ENCODE measurements at regions of chr11 and their contacts with region 1.

Region 1: DNA sequence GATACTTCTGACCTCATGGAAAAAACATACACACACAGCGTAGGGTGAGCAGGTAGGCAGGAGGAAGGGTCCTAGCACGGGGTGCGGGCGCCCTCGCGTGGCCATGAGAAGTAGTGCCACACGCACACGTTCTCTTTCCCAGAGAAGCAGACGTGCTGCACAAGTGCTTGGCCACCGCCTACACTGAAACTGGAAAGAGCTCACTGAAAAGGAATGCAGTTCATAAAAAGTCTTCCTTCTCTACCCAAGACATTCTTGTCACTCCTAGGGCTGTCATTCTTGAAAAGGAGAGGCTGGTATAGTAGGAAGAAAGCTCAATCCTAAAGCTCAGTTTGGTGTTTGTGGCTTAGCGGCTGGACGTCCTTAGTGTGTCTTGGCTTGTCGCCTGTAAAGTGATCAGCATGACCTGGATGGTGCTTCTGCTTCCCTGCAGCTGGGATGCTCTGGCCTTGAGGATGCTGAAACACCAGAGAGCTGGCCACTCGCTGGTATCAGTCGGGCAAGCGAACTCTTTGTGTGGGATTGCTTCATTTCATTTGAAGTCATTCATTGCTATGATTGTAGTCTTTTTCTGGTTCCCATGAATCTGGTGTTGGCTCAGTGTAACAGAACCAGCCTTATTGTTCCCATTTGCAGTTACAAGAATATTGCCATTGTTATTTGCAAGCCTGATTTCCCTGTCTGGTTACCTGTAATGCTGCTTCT is 303.8 kb downstream of the NTM start:
- DNase-seq: peak in 2 of 9 experiments; percentile 11 to 13
- ATAC-seq: no peak
- H3K4me3 ChIP-seq: no peak overlapping the region
- H3K4me3 Mint-ChIP-seq: no peak overlapping the region
- H3K27ac ChIP-seq: no peak overlapping the region
- H3K27ac Mint-ChIP-seq: no peak overlapping the region
- H3K4me1 ChIP-seq: no peaks in the 10 kb centered on the region
- H3K4me1 Mint-ChIP-seq: no peaks in the 10 kb centered on the region
- H3K27me3 ChIP-seq: no peaks in the 10 kb centered on the region
- H3K27me3 Mint-ChIP-seq: no peaks in the 10 kb centered on the region
- CTCF ChIP-seq: no peak

Region 2: DNA sequence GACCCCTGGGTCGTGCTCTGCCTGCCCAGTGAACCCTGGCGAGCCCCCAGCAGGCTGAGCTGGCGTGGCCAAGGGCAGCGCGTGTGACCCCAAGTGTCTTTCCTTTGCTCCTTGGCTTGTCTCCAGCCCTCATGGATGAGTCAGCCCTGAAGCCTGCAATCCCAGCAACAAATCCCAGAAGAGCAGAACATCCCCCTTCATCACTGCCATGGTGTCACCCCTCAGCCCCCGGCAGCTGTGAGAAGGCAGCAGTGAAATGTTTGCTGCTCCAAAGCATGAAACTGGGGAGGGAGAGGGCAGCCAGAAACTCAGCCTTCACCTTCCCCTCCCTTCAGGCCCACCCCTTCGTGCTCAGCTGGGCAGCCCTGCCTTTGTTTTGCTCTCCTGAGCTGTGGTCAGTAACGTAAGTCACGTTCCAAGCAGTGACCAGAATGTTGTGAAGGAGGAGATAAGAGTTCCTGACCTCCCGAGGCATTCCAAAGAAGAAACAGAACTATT is 1196.0 kb before region 1 on chr11:
- CTCF ChIA-PET with region 1: no interaction called
- POLR2A ChIA-PET with region 1: no interaction called
- intact Hi-C with region 1: no loop called
- DNase-seq: no peak
- ATAC-seq: no peak
- H3K4me3 ChIP-seq: no peak overlapping the region
- H3K4me3 Mint-ChIP-seq: no peak overlapping the region
- H3K27ac ChIP-seq: no peak overlapping the region
- H3K27ac Mint-ChIP-seq: no peak overlapping the region
- H3K4me1 ChIP-seq: no peaks in the 10 kb centered on the region
- H3K4me1 Mint-ChIP-seq: no peaks in the 10 kb centered on the region
- H3K27me3 ChIP-seq: no peaks in the 10 kb centered on the region
- H3K27me3 Mint-ChIP-seq: no peaks in the 10 kb centered on the region
- CTCF ChIP-seq: no peak

Region 3: GRCh38 chr11:130924770-130925169 is 749.4 kb before region 1 on chr11:
- CTCF ChIA-PET with region 1: no interaction called
- POLR2A ChIA-PET with region 1: no interaction called
- intact Hi-C with region 1: loop called in 1 of 2 experiments (anchors 5 kb)
- DNase-seq: no peak
- ATAC-seq: no peak
- H3K4me3 ChIP-seq: no peak overlapping the region
- H3K4me3 Mint-ChIP-seq: no peak overlapping the region
- H3K27ac ChIP-seq: no peak overlapping the region
- H3K27ac Mint-ChIP-seq: no peak overlapping the region
- H3K4me1 ChIP-seq: no peaks in the 10 kb centered on the region
- H3K4me1 Mint-ChIP-seq: no peaks in the 10 kb centered on the region
- H3K27me3 ChIP-seq: no peaks in the 10 kb centered on the region
- H3K27me3 Mint-ChIP-seq: peaks cover 29% of the 10 kb centered on the region
- CTCF ChIP-seq: no peak

Region 4: DNA sequence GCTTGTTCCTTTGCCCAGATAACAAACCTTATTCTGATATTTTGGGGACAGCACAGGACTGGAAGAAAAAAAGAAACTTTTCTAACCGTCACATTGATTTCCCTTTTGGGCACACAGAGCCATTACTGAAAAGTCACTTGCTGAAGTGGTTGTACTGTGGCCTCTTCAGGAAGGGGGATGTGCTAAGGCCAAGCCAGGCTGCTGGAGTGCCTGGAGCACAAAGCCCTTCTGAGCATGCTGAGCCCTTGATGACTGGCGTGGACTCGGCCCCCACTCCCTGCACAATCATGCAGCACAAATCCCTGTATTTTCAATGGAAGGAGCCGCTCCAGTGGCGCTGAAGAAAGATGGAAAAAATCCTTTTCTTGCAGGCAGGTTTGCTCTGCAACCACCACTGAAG is 139.6 kb before region 1 on chr11:
- CTCF ChIA-PET with region 1: no interaction called
- POLR2A ChIA-PET with region 1: no interaction called
- intact Hi-C with region 1: no loop called
- DNase-seq: no peak
- ATAC-seq: no peak
- H3K4me3 ChIP-seq: no peak overlapping the region
- H3K4me3 Mint-ChIP-seq: no peak overlapping the region
- H3K27ac ChIP-seq: no peak overlapping the region
- H3K27ac Mint-ChIP-seq: no peak overlapping the region
- H3K4me1 ChIP-seq: no peaks in the 10 kb centered on the region
- H3K4me1 Mint-ChIP-seq: no peaks in the 10 kb centered on the region
- H3K27me3 ChIP-seq: no peaks in the 10 kb centered on the region
- H3K27me3 Mint-ChIP-seq: peaks cover 2% of the 10 kb centered on the region
- CTCF ChIP-seq: no peak

Region 5: DNA sequence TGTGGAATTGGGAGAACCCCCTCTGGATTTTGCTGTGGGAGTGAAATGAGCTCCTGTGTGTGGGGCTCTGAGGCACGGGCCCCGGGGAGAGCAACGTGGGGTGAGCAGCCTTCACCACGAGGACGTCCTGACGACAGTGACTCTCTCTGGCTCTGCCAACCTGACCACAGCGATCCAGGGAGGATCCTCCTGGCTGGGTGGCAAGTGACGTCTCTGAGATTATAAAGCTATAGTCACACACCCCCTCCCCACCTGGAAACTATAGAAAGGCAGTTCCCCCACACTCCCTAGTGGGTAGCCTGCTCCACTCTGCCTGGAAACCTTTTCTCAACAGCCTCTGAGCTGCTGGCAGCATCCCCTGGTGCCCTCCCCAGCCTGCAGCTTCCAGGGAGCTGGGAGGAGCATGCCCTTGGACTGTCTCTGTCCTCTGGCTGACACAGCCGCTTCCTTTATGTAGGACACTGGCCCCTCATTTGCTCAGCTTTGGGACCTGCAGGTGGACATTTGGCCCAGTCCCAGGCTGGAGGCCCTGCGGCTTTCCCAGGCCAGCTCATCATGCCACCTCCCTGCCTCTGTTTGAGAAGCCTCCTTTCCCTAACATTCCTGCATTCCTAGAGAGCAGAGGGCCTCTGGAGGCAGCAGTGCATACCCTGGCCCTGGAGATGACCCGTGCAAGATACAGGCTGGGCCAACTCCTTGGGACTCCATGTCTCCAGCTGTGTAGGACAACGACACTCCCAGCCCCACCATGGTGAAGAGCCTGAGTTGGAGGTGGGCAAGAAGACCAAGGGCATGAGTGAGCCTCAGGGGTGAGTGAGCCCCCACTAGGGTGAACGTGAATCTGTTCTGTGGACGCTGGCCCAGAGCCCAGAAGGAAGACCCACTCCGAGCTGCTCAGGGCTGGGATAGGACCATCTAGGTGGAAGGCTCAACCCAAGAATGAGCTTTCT is 10.2 kb after region 1 on chr11:
- CTCF ChIA-PET with region 1: interaction called, 12 read pairs
- POLR2A ChIA-PET with region 1: no interaction called
- intact Hi-C with region 1: no loop called
- DNase-seq: no peak
- ATAC-seq: no peak
- H3K4me3 ChIP-seq: no peak overlapping the region
- H3K4me3 Mint-ChIP-seq: no peak overlapping the region
- H3K27ac ChIP-seq: no peak overlapping the region
- H3K27ac Mint-ChIP-seq: no peak overlapping the region
- H3K4me1 ChIP-seq: no peaks in the 10 kb centered on the region
- H3K4me1 Mint-ChIP-seq: no peaks in the 10 kb centered on the region
- H3K27me3 ChIP-seq: peaks cover 0 to 2% of the 10 kb centered on the region in 2 experiments
- H3K27me3 Mint-ChIP-seq: peaks cover 8% of the 10 kb centered on the region
- CTCF ChIP-seq: no peak

Region 6: DNA sequence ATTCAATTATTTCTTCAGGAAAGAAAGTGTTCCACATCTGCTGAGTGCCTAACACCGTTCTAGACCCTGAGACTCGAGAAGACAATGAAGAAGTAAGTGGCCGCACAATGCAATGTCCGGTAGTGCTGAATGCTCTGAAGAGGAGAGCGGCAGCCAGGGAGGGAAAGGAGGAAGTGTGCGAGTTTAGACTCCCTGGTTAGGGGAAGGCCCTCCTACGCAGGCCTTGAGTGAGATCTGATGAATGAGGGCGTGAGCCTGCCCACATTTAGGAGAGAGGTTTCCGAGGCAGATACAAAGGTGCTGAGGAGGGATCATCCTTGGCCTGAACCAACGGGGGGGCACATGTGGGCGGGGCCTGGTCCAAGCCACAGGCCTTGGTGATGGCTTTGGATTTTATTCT is 254.8 kb after region 1 on chr11:
- CTCF ChIA-PET with region 1: no interaction called
- POLR2A ChIA-PET with region 1: no interaction called
- intact Hi-C with region 1: no loop called
- DNase-seq: no peak
- ATAC-seq: no peak
- H3K4me3 ChIP-seq: no peak overlapping the region
- H3K4me3 Mint-ChIP-seq: no peak overlapping the region
- H3K27ac ChIP-seq: no peak overlapping the region
- H3K27ac Mint-ChIP-seq: no peak overlapping the region
- H3K4me1 ChIP-seq: no peaks in the 10 kb centered on the region
- H3K4me1 Mint-ChIP-seq: no peaks in the 10 kb centered on the region
- H3K27me3 ChIP-seq: no peaks in the 10 kb centered on the region
- H3K27me3 Mint-ChIP-seq: peaks cover 4% of the 10 kb centered on the region
- CTCF ChIP-seq: no peak

Region 7: GRCh38 chr11:131980888-131981668 is 306.9 kb after region 1 on chr11:
- CTCF ChIA-PET with region 1: no interaction called
- POLR2A ChIA-PET with region 1: no interaction called
- intact Hi-C with region 1: no loop called
- DNase-seq: no peak
- ATAC-seq: no peak
- H3K4me3 ChIP-seq: no peak overlapping the region
- H3K4me3 Mint-ChIP-seq: no peak overlapping the region
- H3K27ac ChIP-seq: no peak overlapping the region
- H3K27ac Mint-ChIP-seq: no peak overlapping the region
- H3K4me1 ChIP-seq: no peaks in the 10 kb centered on the region
- H3K4me1 Mint-ChIP-seq: no peaks in the 10 kb centered on the region
- H3K27me3 ChIP-seq: no peaks in the 10 kb centered on the region
- H3K27me3 Mint-ChIP-seq: peaks cover 5% of the 10 kb centered on the region
- CTCF ChIP-seq: no peak